ENCODE measurements at regions of chr7 and their contacts with region 1.

Region 1: GRCh38 chr7:88516429-88516828 is 209.7 kb upstream of the STEAP4 start:
- DNase-seq: no peak
- ATAC-seq: no peak
- H3K4me3 ChIP-seq: no peak overlapping the region
- H3K27ac ChIP-seq: no peak overlapping the region
- H3K4me1 ChIP-seq: no peaks in the 10 kb centered on the region
- H3K27me3 ChIP-seq: no peaks in the 10 kb centered on the region
- CTCF ChIP-seq: no peak

Region 2: DNA sequence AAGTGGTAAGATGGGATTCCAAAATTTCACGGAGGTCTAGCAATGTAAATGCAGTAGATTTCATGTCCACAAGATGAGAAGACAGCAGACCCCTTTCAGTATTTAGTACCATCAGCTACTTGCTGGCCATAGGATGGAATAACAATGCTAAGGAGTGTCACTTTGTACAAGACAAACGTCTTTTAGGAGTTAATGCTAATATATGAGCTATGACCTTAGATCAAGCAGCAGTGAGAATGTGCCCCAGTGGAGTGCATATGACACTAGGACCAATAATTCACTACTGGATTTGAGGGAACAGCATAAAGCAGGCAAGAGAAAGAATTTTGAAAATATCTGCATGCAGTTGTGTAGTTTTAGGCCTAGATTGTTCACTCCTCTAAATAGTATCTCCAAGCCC is 60.3 kb after region 1 on chr7:
- intact Hi-C with region 1: loop called in 1 of 10 experiments (anchors 10 kb)
- DNase-seq: no peak
- ATAC-seq: no peak
- H3K4me3 ChIP-seq: no peak overlapping the region
- H3K27ac ChIP-seq: no peak overlapping the region
- H3K4me1 ChIP-seq: no peaks in the 10 kb centered on the region
- H3K27me3 ChIP-seq: no peaks in the 10 kb centered on the region
- CTCF ChIP-seq: no peak

Measured in heart right ventricle (tissue), 16 donors.